ENCODE measurements at regions of chr6 and their contacts with region 1.

Region 1: DNA sequence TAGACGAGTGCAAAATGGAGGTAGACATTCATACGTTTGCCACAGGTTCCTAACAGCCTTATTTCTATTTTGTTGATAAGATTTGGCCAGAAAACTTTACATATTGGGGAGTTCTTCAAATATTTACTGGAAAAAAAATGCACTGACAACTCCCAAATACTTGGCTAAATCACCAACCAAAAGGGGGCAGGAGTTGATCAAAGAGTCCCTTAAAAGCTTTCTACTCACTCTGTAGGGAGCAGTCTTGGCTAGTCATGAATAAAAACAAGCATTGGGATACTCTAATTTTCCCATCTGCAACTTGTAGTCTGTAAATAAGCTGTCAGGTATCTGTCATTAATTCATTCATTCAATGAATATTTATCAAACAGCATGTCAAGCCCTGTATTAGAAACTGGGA is 18.4 kb downstream of the TENT5A start:
- ATAC-seq: no peak
- H3K4me3 ChIP-seq: no peak overlapping the region
- H3K27ac ChIP-seq: no peak overlapping the region
- H3K4me1 ChIP-seq: peaks cover 0 to 3% of the 10 kb centered on the region in 2 donors

Region 2: GRCh38 chr6:81241126-81242041 is 492.7 kb before region 1 on chr6:
- in situ Hi-C with region 1: loop called in 1 of 9 experiments (anchors 25 kb)
- ATAC-seq: peak in 2 of 8 experiments; percentile 37 to 42
- H3K4me3 ChIP-seq: no peak overlapping the region
- H3K27ac ChIP-seq: no peak overlapping the region
- H3K4me1 ChIP-seq: no peaks in the 10 kb centered on the region

Region 3: GRCh38 chr6:81265092-81265491 is 469.0 kb before region 1 on chr6:
- in situ Hi-C with region 1: loop called in 1 of 9 experiments (anchors 25 kb)
- ATAC-seq: peak in 2 of 8 experiments; percentile 71 to 100
- H3K4me3 ChIP-seq: no peak overlapping the region
- H3K27ac ChIP-seq: no peak overlapping the region
- H3K4me1 ChIP-seq: no peaks in the 10 kb centered on the region

Measured in motor neuron (in vitro differentiated cells).